ENCODE measurements at regions of chr12 and their contacts with region 1.

Region 1: DNA sequence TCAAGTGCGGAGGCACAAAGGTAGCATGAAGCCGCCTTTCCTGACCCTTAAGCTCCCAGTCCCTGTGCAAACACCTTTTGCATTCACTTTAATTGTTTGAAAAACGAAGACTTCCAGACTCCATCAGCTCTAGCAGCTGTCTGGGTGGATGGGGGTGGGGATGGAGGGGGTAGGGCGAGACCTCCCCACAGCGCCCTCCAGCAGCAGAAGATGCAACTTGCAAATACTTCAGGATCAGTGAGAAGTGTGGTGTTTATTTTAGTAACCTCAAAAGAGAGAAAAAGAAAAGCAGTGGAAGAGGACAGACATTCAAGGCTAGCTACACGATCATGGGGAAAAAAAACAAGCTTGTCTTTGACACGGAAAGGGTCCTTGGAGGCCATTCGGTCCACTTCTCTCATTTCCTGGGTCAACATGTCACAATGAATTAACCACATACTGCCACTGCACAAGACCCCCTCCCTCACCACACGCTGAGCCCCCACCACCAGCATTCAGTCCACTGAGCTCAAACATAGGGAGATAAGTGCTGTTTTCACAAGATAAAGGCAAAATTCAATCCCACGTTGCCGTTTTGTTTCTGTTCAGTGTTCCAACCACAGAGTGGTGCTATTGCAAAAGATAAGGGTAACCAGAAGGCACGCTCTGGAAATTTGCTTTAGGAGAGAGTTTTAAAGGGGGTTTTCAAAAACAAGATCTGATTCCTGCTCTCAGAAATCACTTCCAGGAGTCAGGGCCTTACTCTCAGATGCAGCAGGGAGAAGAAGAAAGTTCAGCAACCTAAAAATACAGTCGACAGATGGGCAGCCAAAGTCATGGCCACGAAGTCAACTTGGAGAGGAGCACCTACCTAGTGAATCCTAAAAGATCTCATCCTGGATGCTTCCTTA is 3.3 kb upstream of the NTF3 start:
- DNase-seq: no peak
- H3K4me3 ChIP-seq: no peak overlapping the region
- H3K27ac ChIP-seq: peak overlapping the region; percentile 92 to 96
- H3K4me1 ChIP-seq: peaks cover 0 to 40% (median 22%) of the 10 kb centered on the region in 4 donors
- H3K27me3 ChIP-seq: no peaks in the 10 kb centered on the region
- CTCF ChIP-seq: peak; percentile 60 to 86

Region 2: GRCh38 chr12:5102261-5102789 is 326.3 kb before region 1 on chr12:
- intact Hi-C with region 1: loop called (anchors 5 kb)
- DNase-seq: no peak
- H3K4me3 ChIP-seq: no peak overlapping the region
- H3K27ac ChIP-seq: no peak overlapping the region
- H3K4me1 ChIP-seq: peaks cover 0 to 7% (median 0%) of the 10 kb centered on the region in 4 donors
- H3K27me3 ChIP-seq: peaks cover 0 to 2% of the 10 kb centered on the region in 2 donors
- CTCF ChIP-seq: no peak

Region 3: DNA sequence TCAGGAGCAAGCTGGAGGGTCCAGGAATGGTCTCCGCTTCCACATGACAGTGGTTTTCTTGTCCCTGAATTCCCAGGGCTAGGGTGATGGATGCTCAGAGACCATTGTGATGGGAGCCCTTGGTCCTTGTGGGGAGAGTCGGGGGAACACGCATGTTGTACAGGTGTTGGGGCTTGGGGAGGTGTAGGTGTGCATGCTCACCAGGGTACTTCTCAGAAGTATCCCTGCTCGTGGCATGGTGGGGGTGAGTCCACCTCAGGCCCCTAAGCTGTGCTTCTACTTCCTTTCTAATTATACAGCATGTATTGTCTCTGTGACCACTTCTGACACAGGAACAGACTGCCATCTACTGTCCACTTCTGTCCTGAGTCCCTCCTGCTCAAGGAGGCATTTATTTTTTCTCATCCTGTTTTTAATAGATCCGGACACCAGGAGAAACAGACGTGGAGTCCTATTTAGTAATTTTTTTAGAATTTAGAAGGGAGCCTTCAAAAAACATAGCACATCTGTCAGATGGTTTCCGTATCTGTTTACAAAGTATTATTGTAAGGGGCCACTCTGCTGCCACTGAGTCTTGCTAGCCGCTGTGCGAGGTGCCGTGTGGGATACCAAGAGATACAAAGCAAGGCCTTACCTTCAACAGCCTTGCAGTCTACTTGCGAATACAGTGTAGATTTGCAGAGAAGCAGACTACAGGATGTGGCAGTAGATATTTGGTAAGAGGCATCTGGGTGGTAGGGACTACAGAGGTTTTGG is 13.9 kb after region 1 on chr12:
- intact Hi-C with region 1: loop called (anchors 2 kb)
- DNase-seq: no peak
- H3K4me3 ChIP-seq: no peak overlapping the region
- H3K27ac ChIP-seq: no peak overlapping the region
- H3K4me1 ChIP-seq: peaks cover 0 to 83% (median 28%) of the 10 kb centered on the region in 4 donors
- H3K27me3 ChIP-seq: no peaks in the 10 kb centered on the region
- CTCF ChIP-seq: peak; percentile 60 to 64

Region 4: DNA sequence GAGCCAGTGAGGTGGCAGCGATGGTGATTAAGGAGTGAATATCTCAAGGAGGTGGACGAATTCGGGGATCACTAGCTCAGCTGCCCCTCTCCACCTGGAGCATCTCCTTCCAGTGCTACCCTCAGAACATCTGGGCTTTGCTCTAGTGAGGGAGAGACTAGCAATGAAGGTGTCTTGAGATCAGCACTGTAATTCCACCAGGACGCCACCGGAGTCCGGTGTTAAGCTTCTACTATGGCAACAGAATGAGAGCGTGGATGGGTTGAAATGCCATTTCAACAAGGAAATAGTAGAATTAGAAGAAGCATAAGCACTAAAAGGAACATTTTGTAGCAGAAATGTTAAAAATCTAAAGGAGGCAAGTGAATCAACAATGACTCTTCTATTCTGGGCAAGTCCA is 64.4 kb after region 1 on chr12:
- intact Hi-C with region 1: loop called (anchors 5 kb)
- DNase-seq: no peak
- H3K4me3 ChIP-seq: no peak overlapping the region
- H3K27ac ChIP-seq: peak overlapping the region; percentile 45 to 81
- H3K4me1 ChIP-seq: peaks cover 0 to 91% (median 42%) of the 10 kb centered on the region in 4 donors
- H3K27me3 ChIP-seq: no peaks in the 10 kb centered on the region
- CTCF ChIP-seq: no peak

Region 5: GRCh38 chr12:5511644-5512600 is 83.3 kb after region 1 on chr12:
- intact Hi-C with region 1: loop called (anchors 2 kb)
- DNase-seq: no peak
- H3K4me3 ChIP-seq: no peak overlapping the region
- H3K27ac ChIP-seq: no peak overlapping the region
- H3K4me1 ChIP-seq: peaks cover 0 to 11% (median 3%) of the 10 kb centered on the region in 4 donors
- H3K27me3 ChIP-seq: no peaks in the 10 kb centered on the region
- CTCF ChIP-seq: peak; percentile 61 to 68

Region 6: GRCh38 chr12:5650829-5651461 is 222.4 kb after region 1 on chr12:
- intact Hi-C with region 1: loop called (anchors 5 kb)
- DNase-seq: no peak
- H3K4me3 ChIP-seq: no peak overlapping the region
- H3K27ac ChIP-seq: no peak overlapping the region
- H3K4me1 ChIP-seq: peaks cover 0 to 3% (median 0%) of the 10 kb centered on the region in 4 donors
- H3K27me3 ChIP-seq: peaks cover 0 to 13% of the 10 kb centered on the region in 2 donors
- CTCF ChIP-seq: no peak

Region 7: GRCh38 chr12:5796171-5796958 is 367.8 kb after region 1 on chr12:
- intact Hi-C with region 1: loop called (anchors 10 kb)
- DNase-seq: no peak
- H3K4me3 ChIP-seq: no peak overlapping the region
- H3K27ac ChIP-seq: no peak overlapping the region
- H3K4me1 ChIP-seq: no peaks in the 10 kb centered on the region
- H3K27me3 ChIP-seq: peaks cover 0 to 4% of the 10 kb centered on the region in 2 donors
- CTCF ChIP-seq: peak; percentile 59 to 64

Measured in tibial artery (tissue), 4 donors.